Lower leg skin (tissue), 4 donors: ENCODE measurements at regions of chr20 and their contacts with region 1.

Region 1: GRCh38 chr20:41038878-41039404 is 10.3 kb downstream of the TOP1 start:
- DNase-seq: no peak
- H3K4me3 ChIP-seq: no peak overlapping the region
- CTCF ChIP-seq: no peak
- POLR2A ChIP-seq: no peak

Region 2: GRCh38 chr20:41232973-41233926 is 194.3 kb after region 1 on chr20:
- intact Hi-C with region 1: loop called (anchors 5 kb)
- DNase-seq: peak in 1 of 2 donors; percentile 59
- H3K4me3 ChIP-seq: no peak overlapping the region
- CTCF ChIP-seq: no peak
- POLR2A ChIP-seq: no peak